ENCODE measurements at regions of chr1 and their contacts with region 1.

Region 1: DNA sequence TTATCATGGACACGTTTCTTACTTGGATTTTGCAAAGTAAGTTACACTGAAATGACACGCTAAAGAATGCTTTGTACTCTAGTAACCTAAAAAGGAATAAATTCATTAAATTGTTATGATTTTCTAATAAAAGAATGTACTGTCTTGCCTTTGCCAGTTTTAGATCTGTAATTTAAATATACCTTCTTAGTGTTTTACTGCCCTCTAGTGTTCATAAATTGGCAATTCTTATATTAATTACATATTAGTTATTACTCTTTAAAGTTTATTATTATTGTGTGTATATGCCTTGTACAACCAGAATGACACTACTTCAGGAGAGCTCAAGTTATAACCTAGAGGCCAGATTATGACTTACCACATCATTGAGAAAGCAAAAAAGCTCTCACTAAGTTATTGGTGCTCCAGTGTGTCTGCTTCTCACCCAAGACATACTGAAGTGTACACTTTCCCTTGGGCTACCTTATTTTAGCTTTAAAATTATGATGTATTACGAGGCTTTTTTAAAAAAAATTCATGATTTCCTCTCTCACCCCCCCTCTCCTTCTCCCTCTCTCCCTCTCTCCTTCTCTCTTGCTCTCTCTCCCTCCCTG is 169.9 kb downstream of the HS2ST1 start:
- DNase-seq: peak; percentile 23
- CTCF ChIP-seq: peak; percentile 20

Region 2: GRCh38 chr1:86704458-86704971 is 379.8 kb before region 1 on chr1 and contains the start of gene SH3GLB1:
- CTCF ChIA-PET with region 1: interaction called, 39 read pairs
- POLR2A ChIA-PET with region 1: no interaction called
- DNase-seq: peak; percentile 90
- CTCF ChIP-seq: peak; percentile 88

Region 3: GRCh38 chr1:86833461-86834215 is 250.7 kb before region 1 on chr1:
- CTCF ChIA-PET with region 1: interaction called, 119 read pairs
- POLR2A ChIA-PET with region 1: no interaction called
- DNase-seq: peak; percentile 74
- CTCF ChIP-seq: peak; percentile 67

Region 4: GRCh38 chr1:86913896-86914634 is 170.3 kb before region 1 on chr1 and contains the start of gene SELENOF:
- CTCF ChIA-PET with region 1: interaction called, 25 read pairs
- POLR2A ChIA-PET with region 1: no interaction called
- DNase-seq: peak; percentile 95
- CTCF ChIP-seq: no peak

Region 5: DNA sequence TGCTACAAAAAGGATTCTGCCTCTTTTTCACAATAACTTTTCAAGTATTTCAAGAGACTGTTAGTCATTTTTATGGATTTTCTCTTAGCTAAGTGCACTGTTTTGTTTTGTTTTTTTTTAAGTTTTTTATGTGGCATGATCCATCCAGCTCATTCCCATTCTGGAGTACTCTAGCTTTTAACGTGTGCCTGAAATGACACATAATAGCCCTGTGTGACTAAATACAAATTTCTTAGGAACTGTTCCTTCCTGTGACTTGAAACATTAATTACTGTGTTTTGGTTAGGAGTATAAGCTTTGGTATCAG is 26.0 kb before region 1 on chr1:
- CTCF ChIA-PET with region 1: interaction called, 51 read pairs
- POLR2A ChIA-PET with region 1: no interaction called
- DNase-seq: no peak
- CTCF ChIP-seq: no peak

Region 6: GRCh38 chr1:87074001-87074795 is 10.1 kb before region 1 on chr1:
- CTCF ChIA-PET with region 1: interaction called, 36 read pairs
- POLR2A ChIA-PET with region 1: no interaction called
- DNase-seq: no peak
- CTCF ChIP-seq: no peak

Region 7: GRCh38 chr1:87129601-87130000 is 45.3 kb after region 1 on chr1:
- CTCF ChIA-PET with region 1: no interaction called
- POLR2A ChIA-PET with region 1: no interaction called
- DNase-seq: no peak
- CTCF ChIP-seq: no peak

Region 8: DNA sequence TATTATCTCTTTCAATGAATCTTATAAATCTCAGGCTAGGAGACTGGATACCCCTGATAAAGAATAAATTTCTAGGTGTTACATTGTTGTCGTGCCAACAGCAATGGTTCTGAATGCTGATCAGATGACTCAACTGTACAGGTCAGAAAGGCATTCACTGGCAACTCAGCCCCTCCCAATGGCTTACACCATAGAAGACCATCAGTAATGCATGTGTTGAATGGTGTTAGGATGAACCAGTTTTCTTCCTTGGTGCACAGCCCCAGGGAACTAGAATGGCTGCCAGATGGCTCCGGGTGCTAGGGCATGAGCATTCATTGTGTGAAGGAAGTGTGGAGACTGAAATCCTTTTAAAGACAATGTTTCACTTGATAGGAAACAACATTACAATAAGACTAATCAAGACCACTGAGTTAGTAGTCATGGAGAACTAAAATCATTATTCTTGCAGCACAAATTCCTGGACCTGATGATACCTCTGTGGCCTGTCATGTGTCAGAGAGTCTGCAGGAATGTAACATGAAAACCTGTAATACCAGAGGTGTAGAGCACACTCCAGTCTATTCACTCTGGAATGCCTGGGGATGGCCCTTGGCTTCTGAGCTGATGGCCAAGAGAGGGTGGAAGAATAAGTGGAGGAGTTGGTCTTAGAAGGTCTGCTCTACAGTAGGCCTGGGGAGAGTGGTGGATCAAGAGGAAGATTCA is 56.7 kb after region 1 on chr1:
- CTCF ChIA-PET with region 1: no interaction called
- POLR2A ChIA-PET with region 1: no interaction called
- DNase-seq: no peak
- CTCF ChIP-seq: no peak

Measured in GM10248 (cell line).